ENCODE measurements at regions of chr2 and their contacts with region 1.

Region 1: GRCh38 chr2:37665604-37666362 is 5.7 kb downstream of the CDC42EP3 start:
- DNase-seq: no peak
- H3K4me3 ChIP-seq: peak overlapping the region in 2 of 4 donors; percentile 5 to 6
- H3K27ac ChIP-seq: peak overlapping the region; percentile 39 to 99 (median 72)
- H3K4me1 ChIP-seq: peaks cover 0 to 95% (median 76%) of the 10 kb centered on the region in 4 donors
- H3K27me3 ChIP-seq: no peaks in the 10 kb centered on the region
- CTCF ChIP-seq: no peak
- EP300 ChIP-seq: peak in 1 of 4 donors; percentile 2
- POLR2A ChIP-seq: no peak

Region 2: DNA sequence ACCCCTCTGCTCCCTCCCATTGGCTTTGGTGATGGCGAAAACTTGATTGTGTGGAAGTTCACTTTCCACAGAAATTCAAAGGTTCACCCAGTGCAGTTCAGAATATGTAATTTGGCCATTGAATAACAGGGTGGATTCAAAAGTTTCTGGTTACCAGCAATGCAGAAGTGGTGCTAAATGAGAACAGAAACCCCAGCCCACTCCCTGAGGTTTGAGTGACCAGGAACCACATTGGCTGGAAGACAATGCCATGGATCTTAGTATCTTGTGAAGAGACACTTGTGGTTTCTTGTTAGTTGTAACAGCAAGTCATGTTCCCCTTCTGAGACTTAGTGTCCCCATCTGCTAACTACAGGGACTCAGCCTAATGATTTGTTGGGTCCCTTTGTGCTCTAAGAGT is 271.5 kb before region 1 on chr2:
- intact Hi-C with region 1: loop called (anchors 5 kb)
- DNase-seq: no peak
- H3K4me3 ChIP-seq: no peak overlapping the region
- H3K27ac ChIP-seq: no peak overlapping the region
- H3K4me1 ChIP-seq: peaks cover 0 to 18% (median 12%) of the 10 kb centered on the region in 4 donors
- H3K27me3 ChIP-seq: no peaks in the 10 kb centered on the region
- CTCF ChIP-seq: no peak
- EP300 ChIP-seq: no peak
- POLR2A ChIP-seq: no peak

Measured in sigmoid colon (tissue), 7 donors.